GM12878 (cell line): ENCODE measurements at regions of chr5 and their contacts with region 1.

Region 1: DNA sequence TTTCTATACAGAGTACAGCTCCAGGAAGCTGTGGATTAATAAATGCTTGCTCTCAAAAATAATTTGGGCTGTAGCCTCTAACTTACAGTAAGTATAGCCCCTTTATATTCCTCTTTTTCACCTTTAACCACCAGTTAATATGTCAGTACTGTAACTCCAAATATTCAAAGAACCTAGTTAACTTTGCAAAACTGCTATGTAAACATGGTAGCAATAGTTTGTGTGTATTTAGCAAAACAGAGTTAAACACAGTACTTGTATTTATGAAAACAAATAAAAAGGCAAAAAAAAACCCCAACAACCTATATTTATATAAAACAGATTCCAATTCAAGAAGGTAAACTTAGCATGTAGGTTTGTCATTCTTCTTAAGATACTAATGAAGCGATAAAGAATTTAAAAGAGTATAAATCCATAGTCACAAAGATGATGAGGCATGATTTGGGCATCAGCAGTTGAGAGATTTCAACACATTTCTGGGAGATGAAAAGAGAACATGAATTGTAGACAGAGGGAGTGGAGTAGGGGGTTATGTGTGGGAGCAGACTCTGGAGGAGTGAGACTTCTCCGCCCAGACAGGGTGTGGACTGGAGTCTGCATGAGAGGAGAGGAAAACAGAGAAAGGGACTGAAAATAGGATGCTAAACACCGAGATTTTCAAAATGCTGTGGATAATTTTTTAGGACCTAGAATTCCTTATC is 47.0 kb upstream of the F2RL1 start:
- DNase-seq: no peak
- ATAC-seq: no peak
- H3K4me3 ChIP-seq: no peak overlapping the region
- H3K27ac ChIP-seq: no peak overlapping the region
- H3K4me1 ChIP-seq: no peaks in the 10 kb centered on the region
- H3K27me3 ChIP-seq: no peaks in the 10 kb centered on the region
- CTCF ChIP-seq: no peak
- EP300 ChIP-seq: no peak
- POLR2A ChIP-seq: no peak
- RAD21 ChIP-seq: no peak

Region 2: DNA sequence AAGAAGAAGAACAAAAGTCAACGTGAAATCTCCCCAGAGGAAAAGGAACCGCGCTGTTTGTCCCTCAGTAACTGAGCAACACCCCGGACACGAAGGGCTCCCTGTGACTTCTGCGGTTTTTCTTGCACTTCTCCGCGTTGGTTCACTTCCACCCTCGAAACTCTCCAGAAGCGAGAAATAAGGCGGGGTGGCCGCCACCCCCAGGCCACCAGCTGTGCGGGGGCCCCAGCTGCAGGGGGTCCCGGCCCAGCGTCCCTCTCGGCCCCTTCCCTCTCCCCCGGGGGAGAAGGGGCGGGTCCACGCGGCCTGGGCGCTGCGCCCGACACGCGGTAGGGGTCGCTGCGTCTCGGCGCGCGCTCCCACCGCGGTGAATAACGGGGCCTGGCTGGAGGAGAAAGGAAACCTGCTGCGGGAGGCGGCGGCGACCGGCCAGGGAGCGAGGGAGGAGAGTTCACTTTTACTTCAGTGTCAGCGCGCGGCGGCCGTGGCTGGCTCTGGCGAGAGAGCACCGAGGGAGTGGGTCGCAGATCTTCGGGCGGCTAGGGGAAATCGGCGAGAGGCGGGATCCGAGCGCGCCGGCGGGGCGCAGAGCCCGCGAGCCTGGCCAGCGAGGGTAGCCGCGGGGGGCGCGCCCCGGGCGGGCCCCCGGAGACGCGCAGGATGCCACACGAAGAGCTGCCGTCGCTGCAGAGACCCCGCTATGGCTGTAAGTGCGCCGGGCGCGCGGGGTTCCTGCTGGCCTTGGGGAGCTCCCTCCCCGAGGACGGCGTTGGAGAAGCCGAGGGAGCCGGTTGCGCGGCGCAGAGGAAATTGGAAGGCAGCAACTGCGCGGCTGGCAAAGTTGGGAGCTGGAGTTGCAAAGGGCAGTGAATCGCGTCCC is 368.7 kb before region 1 on chr5 and contains the start of gene IQGAP2:
- CTCF ChIA-PET with region 1: interaction called, 20 read pairs
- POLR2A ChIA-PET with region 1: no interaction called
- RAD21 ChIA-PET with region 1: interaction called, 13 read pairs
- SMC1A ChIA-PET with region 1: interaction called, 10 read pairs
- in situ Hi-C with region 1: loop called (anchors 10 kb)
- intact Hi-C with region 1: loop called (anchors 2 kb)
- DNase-seq: no peak
- ATAC-seq: peak; percentile 76
- H3K4me3 ChIP-seq: peak within 1 kb of the TSS; percentile 86
- H3K27ac ChIP-seq: peak within 1 kb of the TSS; percentile 91
- H3K4me1 ChIP-seq: peaks cover 25% of the 10 kb centered on the region
- H3K27me3 ChIP-seq: no peaks in the 10 kb centered on the region
- CTCF ChIP-seq: peak; percentile 78 to 93 (median 80)
- EP300 ChIP-seq: peak in 1 of 2 experiments; percentile 55; a peak in 1 of 4 replicates
- POLR2A ChIP-seq: peak; percentile 78
- RAD21 ChIP-seq: peak; percentile 68
- polyA plus RNA-seq, gene IQGAP2: 17.7 to 17.9 TPM

Region 3: GRCh38 chr5:76590027-76590426 is 181.8 kb before region 1 on chr5:
- CTCF ChIA-PET with region 1: interaction called, 11 read pairs
- POLR2A ChIA-PET with region 1: interaction called, 6 read pairs
- RAD21 ChIA-PET with region 1: interaction called, 12 read pairs
- SMC1A ChIA-PET with region 1: interaction called, 8 read pairs
- in situ Hi-C with region 1: loop called (anchors 5 kb)
- intact Hi-C with region 1: no loop called
- DNase-seq: peak; percentile 53
- ATAC-seq: peak; percentile 99
- H3K4me3 ChIP-seq: no peak overlapping the region
- H3K27ac ChIP-seq: peak overlapping the region; percentile 38; the same call in 1 of the 2 replicates
- H3K4me1 ChIP-seq: peaks cover 8% of the 10 kb centered on the region; the same call in 1 of the 2 replicates
- H3K27me3 ChIP-seq: no peaks in the 10 kb centered on the region
- CTCF ChIP-seq: no peak
- EP300 ChIP-seq: peak; percentile 67 to 72; a peak in 2 of 4 replicates
- POLR2A ChIP-seq: no peak
- RAD21 ChIP-seq: no peak

Region 4: GRCh38 chr5:76608833-76609232 is 163.0 kb before region 1 on chr5:
- CTCF ChIA-PET with region 1: interaction called, 239 read pairs
- POLR2A ChIA-PET with region 1: interaction called, 4 read pairs
- RAD21 ChIA-PET with region 1: interaction called, 166 read pairs
- SMC1A ChIA-PET with region 1: interaction called, 154 read pairs
- in situ Hi-C with region 1: no loop called
- intact Hi-C with region 1: no loop called
- DNase-seq: no peak
- ATAC-seq: peak; percentile 59
- H3K4me3 ChIP-seq: no peak overlapping the region
- H3K27ac ChIP-seq: no peak overlapping the region
- H3K4me1 ChIP-seq: no peaks in the 10 kb centered on the region
- H3K27me3 ChIP-seq: no peaks in the 10 kb centered on the region
- CTCF ChIP-seq: no peak
- EP300 ChIP-seq: peak in 1 of 2 experiments; percentile 23; a peak in 1 of 4 replicates
- POLR2A ChIP-seq: no peak
- RAD21 ChIP-seq: no peak

Region 5: DNA sequence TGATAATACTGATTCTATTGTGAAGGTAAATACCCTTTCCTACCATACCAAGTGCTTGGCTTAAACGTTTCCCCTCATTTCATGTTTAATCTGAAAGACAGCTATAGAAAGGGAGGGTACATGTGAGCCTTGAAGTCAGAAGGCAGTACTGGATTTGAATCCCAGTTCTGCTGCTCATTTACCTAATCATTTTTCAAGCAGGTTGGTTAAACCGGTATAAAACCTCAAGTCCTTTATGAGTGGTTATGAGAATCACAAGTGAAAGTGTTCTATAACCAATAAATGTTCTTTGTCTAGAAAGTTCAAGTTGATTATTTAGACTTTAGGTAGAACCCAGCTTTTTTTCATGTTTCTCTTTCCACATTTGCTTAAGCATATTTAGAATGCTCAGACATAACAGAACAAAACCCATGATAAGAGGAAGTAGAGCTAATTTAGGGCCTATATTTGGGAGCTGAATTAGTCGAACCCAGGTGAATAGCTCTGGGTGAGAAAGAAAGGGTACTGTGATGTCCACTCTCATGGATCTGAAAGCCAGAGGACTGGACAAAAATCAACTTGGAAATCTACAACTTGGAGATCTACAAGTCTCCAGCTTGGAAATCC is 118.9 kb before region 1 on chr5:
- CTCF ChIA-PET with region 1: interaction called, 14 read pairs
- POLR2A ChIA-PET with region 1: no interaction called
- RAD21 ChIA-PET with region 1: interaction called, 8 read pairs
- SMC1A ChIA-PET with region 1: interaction called, 5 read pairs
- in situ Hi-C with region 1: no loop called
- intact Hi-C with region 1: no loop called
- DNase-seq: peak; percentile 12
- ATAC-seq: peak; percentile 50
- H3K4me3 ChIP-seq: no peak overlapping the region
- H3K27ac ChIP-seq: no peak overlapping the region
- H3K4me1 ChIP-seq: peaks cover 6% of the 10 kb centered on the region; the same call in 1 of the 2 replicates
- H3K27me3 ChIP-seq: no peaks in the 10 kb centered on the region
- CTCF ChIP-seq: no peak
- EP300 ChIP-seq: no peak
- POLR2A ChIP-seq: no peak
- RAD21 ChIP-seq: no peak

Region 6: GRCh38 chr5:76715736-76716455 is 56.0 kb before region 1 on chr5 and contains the start of gene F2R:
- CTCF ChIA-PET with region 1: interaction called, 122 read pairs
- POLR2A ChIA-PET with region 1: interaction called, 4 read pairs
- RAD21 ChIA-PET with region 1: interaction called, 59 read pairs
- SMC1A ChIA-PET with region 1: interaction called, 136 read pairs
- in situ Hi-C with region 1: loop called (anchors 5 kb)
- intact Hi-C with region 1: loop called (anchors 1 kb)
- DNase-seq: no peak
- ATAC-seq: peak; percentile 82
- H3K4me3 ChIP-seq: peak within 1 kb of the TSS; percentile 79
- H3K27ac ChIP-seq: no peak within 1 kb of the TSS
- H3K4me1 ChIP-seq: peaks cover 16% of the 10 kb centered on the region
- H3K27me3 ChIP-seq: peaks cover 0 to 13% of the 10 kb centered on the region in 2 experiments; a peak in 2 of 4 replicates
- CTCF ChIP-seq: peak; percentile 38 to 64 (median 49); a peak in 4 of 6 replicates
- EP300 ChIP-seq: no peak
- POLR2A ChIP-seq: peak; percentile 35; the same call in 1 of the 2 replicates
- RAD21 ChIP-seq: peak; percentile 34; the same call in 1 of the 2 replicates
- polyA plus RNA-seq, gene F2R: 1.8 to 2.4 TPM

Region 7: GRCh38 chr5:76745670-76746069 is 26.2 kb before region 1 on chr5:
- CTCF ChIA-PET with region 1: interaction called, 80 read pairs
- POLR2A ChIA-PET with region 1: interaction called, 4 read pairs
- RAD21 ChIA-PET with region 1: interaction called, 76 read pairs
- SMC1A ChIA-PET with region 1: interaction called, 63 read pairs
- in situ Hi-C with region 1: no loop called
- intact Hi-C with region 1: no loop called
- DNase-seq: no peak
- ATAC-seq: no peak
- H3K4me3 ChIP-seq: no peak overlapping the region
- H3K27ac ChIP-seq: no peak overlapping the region
- H3K4me1 ChIP-seq: no peaks in the 10 kb centered on the region
- H3K27me3 ChIP-seq: no peaks in the 10 kb centered on the region
- CTCF ChIP-seq: no peak
- EP300 ChIP-seq: no peak
- POLR2A ChIP-seq: no peak
- RAD21 ChIP-seq: no peak